ENCODE measurements at regions of chr7 and their contacts with region 1.

Region 1: DNA sequence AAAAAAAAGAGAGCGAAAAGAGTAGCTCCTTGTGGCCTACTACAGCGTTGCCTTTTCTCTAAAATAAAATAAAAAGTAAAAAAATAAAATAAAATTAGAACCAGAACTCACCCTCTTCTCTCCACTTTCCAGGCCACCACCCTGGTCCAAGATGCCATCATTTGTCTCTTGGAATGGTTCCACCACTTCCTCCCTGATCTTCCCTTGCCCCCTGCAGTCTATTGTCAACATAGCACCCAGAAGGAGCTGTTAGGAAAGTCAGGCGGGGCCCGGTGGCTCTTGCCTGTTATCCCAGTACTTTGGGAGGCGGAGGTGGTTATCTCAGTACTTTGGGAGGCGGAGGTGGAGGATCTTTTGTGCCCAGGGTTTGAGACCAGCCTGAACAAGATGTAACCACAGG is 7.6 kb upstream of the GRID2IP start:
- DNase-seq: peak in 2 of 35 experiments; percentile 18 to 51
- ATAC-seq: peak in 2 of 4 experiments; percentile 43 to 51
- H3K4me3 ChIP-seq: no peak overlapping the region
- H3K4me3 Mint-ChIP-seq: no peak overlapping the region
- H3K27ac ChIP-seq: no peak overlapping the region
- H3K27ac Mint-ChIP-seq: no peak overlapping the region
- H3K4me1 ChIP-seq: peaks cover 2 to 14% of the 10 kb centered on the region in 2 experiments
- H3K4me1 Mint-ChIP-seq: peaks cover 6 to 10% (median 7%) of the 10 kb centered on the region in 3 donors
- H3K27me3 ChIP-seq: peaks cover 0 to 11% of the 10 kb centered on the region in 2 experiments
- H3K27me3 Mint-ChIP-seq: no peaks in the 10 kb centered on the region

Region 2: GRCh38 chr7:6577365-6578113 is 18.7 kb after region 1 on chr7 and contains the start of gene ZDHHC4:
- CTCF ChIA-PET with region 1: interaction called, 3 to 11 read pairs
- POLR2A ChIA-PET with region 1: no interaction called
- DNase-seq: peak; percentile 71 to 92 (median 83)
- ATAC-seq: peak; percentile 96 to 98 (median 96)
- H3K4me3 ChIP-seq: peak within 1 kb of the TSS; percentile 71 to 84
- H3K4me3 Mint-ChIP-seq: peak within 1 kb of the TSS; percentile 80 to 90 (median 83)
- H3K27ac ChIP-seq: peak within 1 kb of the TSS; percentile 94
- H3K27ac Mint-ChIP-seq: peak within 1 kb of the TSS; percentile 90 to 92
- H3K4me1 ChIP-seq: peaks cover 0 to 18% of the 10 kb centered on the region in 2 experiments
- H3K4me1 Mint-ChIP-seq: peaks cover 12 to 21% (median 15%) of the 10 kb centered on the region in 3 donors
- H3K27me3 ChIP-seq: no peaks in the 10 kb centered on the region
- H3K27me3 Mint-ChIP-seq: peaks cover 3 to 4% of the 10 kb centered on the region in 2 donors
- total RNA-seq, gene ZDHHC4: 27.7 to 35.5 (median 30.3) TPM

Measured in T-cell (primary cell).